IMR-90 (cell line): ENCODE measurements at regions of chr19 and their contacts with region 1.

Region 1: DNA sequence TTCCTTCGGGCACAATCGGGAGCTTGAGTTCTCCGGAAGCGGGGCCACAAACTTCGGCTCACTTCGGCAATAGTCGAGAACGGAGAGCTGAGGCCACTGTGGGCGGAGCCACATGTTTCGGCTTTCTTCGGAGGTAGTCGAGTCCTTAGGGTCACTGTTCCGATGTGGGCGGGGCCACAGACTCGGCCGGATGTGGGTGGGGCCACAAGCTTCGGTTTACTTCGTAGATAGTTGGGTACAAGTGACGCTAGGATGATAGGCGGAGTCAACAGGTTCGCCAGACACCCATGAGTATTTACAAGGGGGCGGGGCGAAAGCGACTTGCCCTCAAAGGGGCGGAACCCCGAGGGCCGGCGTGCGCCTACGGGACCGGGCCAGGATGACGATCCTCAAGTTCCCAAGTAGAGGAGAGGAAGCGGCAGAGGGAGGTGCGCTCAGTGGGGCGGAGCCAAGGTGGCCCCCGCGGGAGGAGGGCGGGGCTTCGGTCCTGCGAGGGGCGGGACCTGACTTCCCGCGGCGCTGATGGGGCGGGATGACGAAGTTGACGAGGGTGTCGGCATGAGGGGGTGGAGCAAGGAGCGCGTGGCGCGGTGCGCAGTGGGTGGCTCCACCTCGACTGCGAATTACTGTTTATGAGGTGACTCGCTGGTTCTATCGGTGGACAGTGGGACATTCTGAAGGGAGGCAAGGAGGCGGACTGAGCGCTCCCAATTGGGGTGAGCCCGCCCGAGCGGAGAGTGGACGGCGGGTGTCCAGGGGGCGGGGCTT is 539 bp upstream of the MBOAT7 start:
- DNase-seq: peak; percentile 100
- ATAC-seq: peak; percentile 65
- H3K4me3 ChIP-seq: peak overlapping the region; percentile 70
- H3K27ac ChIP-seq: peak overlapping the region; percentile 93
- H3K4me1 ChIP-seq: peaks cover 5% of the 10 kb centered on the region
- H3K27me3 ChIP-seq: no peaks in the 10 kb centered on the region
- CTCF ChIP-seq: no peak
- POLR2A ChIP-seq: peak; percentile 96
- RAD21 ChIP-seq: no peak

Region 2: GRCh38 chr19:54168174-54168917 is 21.6 kb before region 1 on chr19:
- CTCF ChIA-PET with region 1: interaction called, 3 read pairs
- POLR2A ChIA-PET with region 1: no interaction called
- dilution Hi-C with region 1: no loop called
- in situ Hi-C with region 1: no loop called
- intact Hi-C with region 1: loop called (anchors 2 kb)
- DNase-seq: peak; percentile 73
- ATAC-seq: peak; percentile 95
- H3K4me3 ChIP-seq: no peak overlapping the region
- H3K27ac ChIP-seq: no peak overlapping the region
- H3K4me1 ChIP-seq: no peaks in the 10 kb centered on the region
- H3K27me3 ChIP-seq: no peaks in the 10 kb centered on the region
- CTCF ChIP-seq: peak; percentile 84
- POLR2A ChIP-seq: no peak
- RAD21 ChIP-seq: peak; percentile 73

Region 3: GRCh38 chr19:54201172-54201701 is 11.3 kb after region 1 on chr19:
- CTCF ChIA-PET with region 1: no interaction called
- POLR2A ChIA-PET with region 1: interaction called, 10 read pairs
- dilution Hi-C with region 1: no loop called
- in situ Hi-C with region 1: no loop called
- intact Hi-C with region 1: no loop called
- DNase-seq: no peak
- ATAC-seq: no peak
- H3K4me3 ChIP-seq: peak overlapping the region; percentile 53
- H3K27ac ChIP-seq: peak overlapping the region; percentile 92
- H3K4me1 ChIP-seq: peaks cover 7% of the 10 kb centered on the region
- H3K27me3 ChIP-seq: no peaks in the 10 kb centered on the region
- CTCF ChIP-seq: no peak
- POLR2A ChIP-seq: no peak
- RAD21 ChIP-seq: no peak

Region 4: GRCh38 chr19:54209811-54210494 is 20.0 kb after region 1 on chr19:
- CTCF ChIA-PET with region 1: no interaction called
- POLR2A ChIA-PET with region 1: interaction called, 6 read pairs
- dilution Hi-C with region 1: no loop called
- in situ Hi-C with region 1: no loop called
- intact Hi-C with region 1: loop called (anchors 2 kb)
- DNase-seq: peak; percentile 98
- ATAC-seq: peak; percentile 88
- H3K4me3 ChIP-seq: no peak overlapping the region
- H3K27ac ChIP-seq: peak overlapping the region; percentile 48; the same call in 1 of the 2 replicates
- H3K4me1 ChIP-seq: peaks cover 30% of the 10 kb centered on the region
- H3K27me3 ChIP-seq: no peaks in the 10 kb centered on the region
- CTCF ChIP-seq: no peak
- POLR2A ChIP-seq: peak; percentile 37; the same call in 1 of the 2 replicates
- RAD21 ChIP-seq: no peak